Psoas muscle (tissue), 8 donors: ENCODE measurements at regions of chr1 and their contacts with region 1.

Region 1: GRCh38 chr1:67239738-67240137 is 67.9 kb upstream of the IL12RB2 start:
- DNase-seq: no peak
- ATAC-seq: no peak
- H3K4me3 ChIP-seq: no peak overlapping the region
- H3K27ac ChIP-seq: no peak overlapping the region
- H3K4me1 ChIP-seq: no peaks in the 10 kb centered on the region
- H3K27me3 ChIP-seq: peaks cover 0 to 2% (median 0%) of the 10 kb centered on the region in 3 donors
- CTCF ChIP-seq: no peak

Region 2: GRCh38 chr1:67285780-67286488 is 46.2 kb after region 1 on chr1:
- intact Hi-C with region 1: no loop called
- DNase-seq: no peak
- ATAC-seq: no peak
- H3K4me3 ChIP-seq: no peak overlapping the region
- H3K27ac ChIP-seq: no peak overlapping the region
- H3K4me1 ChIP-seq: no peaks in the 10 kb centered on the region
- H3K27me3 ChIP-seq: no peaks in the 10 kb centered on the region
- CTCF ChIP-seq: no peak

Region 3: GRCh38 chr1:67489643-67490042 is 249.9 kb after region 1 on chr1:
- intact Hi-C with region 1: loop called (anchors 2 to 5 kb)
- DNase-seq: no peak
- ATAC-seq: peak; percentile 84 to 97 (median 92)
- H3K4me3 ChIP-seq: no peak overlapping the region
- H3K27ac ChIP-seq: no peak overlapping the region
- H3K4me1 ChIP-seq: no peaks in the 10 kb centered on the region
- H3K27me3 ChIP-seq: no peaks in the 10 kb centered on the region
- CTCF ChIP-seq: peak; percentile 58

Region 4: DNA sequence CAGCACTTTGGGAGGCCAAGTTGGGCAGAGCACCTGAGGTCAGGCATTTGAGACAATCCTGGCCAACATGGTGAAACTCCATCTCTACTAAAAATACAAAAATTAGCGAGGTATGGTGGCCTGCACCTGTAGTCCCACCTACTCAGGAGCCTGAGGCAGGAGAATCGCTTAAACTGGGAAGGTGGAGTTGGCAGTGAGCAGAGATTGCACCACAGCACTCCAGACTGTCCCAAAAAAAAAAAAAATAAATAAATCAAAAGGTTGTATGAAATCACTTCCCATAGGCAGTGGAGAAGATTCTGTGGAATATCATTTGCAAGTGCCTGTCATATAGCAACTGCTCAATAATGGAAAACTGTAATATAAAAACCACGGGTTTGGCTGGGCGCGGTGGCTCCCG is 255.6 kb after region 1 on chr1:
- intact Hi-C with region 1: loop called (anchors 2 to 5 kb)
- DNase-seq: no peak
- ATAC-seq: no peak
- H3K4me3 ChIP-seq: no peak overlapping the region
- H3K27ac ChIP-seq: no peak overlapping the region
- H3K4me1 ChIP-seq: no peaks in the 10 kb centered on the region
- H3K27me3 ChIP-seq: no peaks in the 10 kb centered on the region
- CTCF ChIP-seq: no peak